Activated CD4-positive, alpha-beta T cell treated with anti-CD3 and anti-CD28 coated beads, Interleukin-2, amount 10 ng/mL, durations not matched to agents 7 days and 5 days (primary cell): ENCODE measurements at regions of chr13 and their contacts with region 1.

Region 1: DNA sequence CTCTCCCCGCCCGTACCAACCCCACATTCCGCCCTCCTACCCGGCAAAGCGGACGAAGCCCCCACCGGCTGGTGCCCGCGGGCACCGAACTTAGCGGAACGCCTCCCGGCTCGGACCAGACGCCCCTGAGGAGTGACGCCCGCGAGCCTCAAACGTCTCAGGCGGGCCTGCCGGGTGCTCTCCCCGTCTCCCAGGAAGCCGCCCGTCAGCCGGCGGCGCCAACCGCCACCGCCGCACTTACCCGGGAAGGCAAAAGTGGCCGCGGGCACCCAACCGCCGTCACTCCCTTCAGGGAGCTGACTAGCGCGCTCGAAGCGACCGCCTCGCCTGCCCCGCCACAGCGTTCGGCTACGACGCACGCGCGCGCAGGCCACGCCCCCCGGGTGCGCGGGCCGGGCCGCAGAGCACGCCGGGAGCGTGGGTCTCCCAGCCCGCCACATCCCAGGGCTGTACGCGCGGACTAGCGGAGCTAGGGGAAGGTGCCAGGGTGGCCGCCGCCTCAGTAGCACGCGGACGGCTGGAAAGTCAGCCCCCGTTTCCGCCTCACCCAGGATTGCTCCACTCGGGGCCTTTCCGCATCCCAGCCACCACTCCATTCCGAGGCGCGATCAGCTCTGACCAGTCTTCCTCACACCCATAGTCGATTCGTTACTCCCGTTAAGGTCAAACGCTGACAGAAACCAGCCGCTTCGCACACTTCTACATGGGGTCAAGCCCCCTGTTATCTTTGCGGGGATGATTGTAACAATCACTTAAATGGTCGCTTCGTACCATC is at the start of gene TEX30:
- DNase-seq: peak; percentile 86
- H3K4me3 Mint-ChIP-seq: peak within 1 kb of the TSS; percentile 88
- H3K27ac Mint-ChIP-seq: peak within 1 kb of the TSS; percentile 97
- H3K4me1 Mint-ChIP-seq: peaks cover 57% of the 10 kb centered on the region
- H3K27me3 Mint-ChIP-seq: peaks cover 2% of the 10 kb centered on the region
- total RNA-seq, gene TEX30: 30.3 to 32.9 TPM

Region 2: DNA sequence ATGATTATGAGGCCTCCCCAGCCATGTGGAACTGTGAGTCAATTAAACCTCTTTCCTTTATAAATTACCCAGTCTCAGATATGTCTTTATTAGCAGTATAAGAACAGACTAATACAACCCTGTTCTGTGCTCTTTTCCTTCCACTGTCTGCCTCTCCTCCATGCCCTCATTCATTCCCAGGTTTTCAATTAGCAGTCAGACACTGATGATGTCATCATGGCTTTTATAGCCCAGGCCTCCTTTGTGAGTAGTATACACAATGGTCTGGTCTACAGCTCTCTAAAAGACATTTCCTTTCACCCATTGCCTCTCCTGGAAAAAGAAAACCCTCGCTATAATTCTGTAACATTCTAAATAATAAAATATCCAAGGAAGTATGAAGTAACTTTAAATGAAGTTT is 397.3 kb before region 1 on chr13:
- CTCF ChIA-PET with region 1: no interaction called
- POLR2A ChIA-PET with region 1: no interaction called
- DNase-seq: no peak
- H3K4me3 Mint-ChIP-seq: no peak overlapping the region
- H3K27ac Mint-ChIP-seq: no peak overlapping the region
- H3K4me1 Mint-ChIP-seq: no peaks in the 10 kb centered on the region
- H3K27me3 Mint-ChIP-seq: peaks cover 2% of the 10 kb centered on the region

Region 3: DNA sequence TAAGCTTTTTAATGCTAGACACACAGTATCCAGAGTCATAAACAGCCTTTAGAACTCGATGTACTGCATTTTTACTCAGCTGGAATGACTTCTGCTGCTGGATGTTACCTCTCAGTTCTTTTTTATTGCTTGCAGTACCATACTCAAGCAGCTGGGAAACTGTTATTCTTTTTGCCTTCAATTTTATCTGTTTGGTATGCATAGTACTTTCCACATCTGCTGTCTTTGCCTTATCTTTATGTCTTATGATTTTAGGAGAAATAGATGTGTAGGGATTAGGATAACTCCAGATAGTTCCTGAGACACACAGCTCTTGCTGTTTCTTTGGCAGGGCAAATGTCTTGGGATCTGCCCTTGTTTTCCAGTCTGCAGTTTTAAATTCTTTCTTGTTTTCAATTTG is 31.5 kb before region 1 on chr13:
- CTCF ChIA-PET with region 1: no interaction called
- POLR2A ChIA-PET with region 1: no interaction called
- DNase-seq: no peak
- H3K4me3 Mint-ChIP-seq: no peak overlapping the region
- H3K27ac Mint-ChIP-seq: no peak overlapping the region
- H3K4me1 Mint-ChIP-seq: no peaks in the 10 kb centered on the region
- H3K27me3 Mint-ChIP-seq: peaks cover 58% of the 10 kb centered on the region

Region 4: GRCh38 chr13:102757006-102757405 is 16.6 kb before region 1 on chr13:
- CTCF ChIA-PET with region 1: interaction called, 12 read pairs
- POLR2A ChIA-PET with region 1: no interaction called
- DNase-seq: no peak
- H3K4me3 Mint-ChIP-seq: no peak overlapping the region
- H3K27ac Mint-ChIP-seq: no peak overlapping the region
- H3K4me1 Mint-ChIP-seq: no peaks in the 10 kb centered on the region
- H3K27me3 Mint-ChIP-seq: no peaks in the 10 kb centered on the region